GM18951 (cell line): ENCODE measurements at regions of chr6 and their contacts with region 1.

Region 1: GRCh38 chr6:43506667-43507471 is 3.3 kb downstream of the LRRC73 start:
- POLR2A ChIP-seq: no peak

Region 2: GRCh38 chr6:43250992-43251373 is 255.9 kb before region 1 on chr6:
- in situ Hi-C with region 1: loop called (anchors 10 kb)
- POLR2A ChIP-seq: no peak

Region 3: DNA sequence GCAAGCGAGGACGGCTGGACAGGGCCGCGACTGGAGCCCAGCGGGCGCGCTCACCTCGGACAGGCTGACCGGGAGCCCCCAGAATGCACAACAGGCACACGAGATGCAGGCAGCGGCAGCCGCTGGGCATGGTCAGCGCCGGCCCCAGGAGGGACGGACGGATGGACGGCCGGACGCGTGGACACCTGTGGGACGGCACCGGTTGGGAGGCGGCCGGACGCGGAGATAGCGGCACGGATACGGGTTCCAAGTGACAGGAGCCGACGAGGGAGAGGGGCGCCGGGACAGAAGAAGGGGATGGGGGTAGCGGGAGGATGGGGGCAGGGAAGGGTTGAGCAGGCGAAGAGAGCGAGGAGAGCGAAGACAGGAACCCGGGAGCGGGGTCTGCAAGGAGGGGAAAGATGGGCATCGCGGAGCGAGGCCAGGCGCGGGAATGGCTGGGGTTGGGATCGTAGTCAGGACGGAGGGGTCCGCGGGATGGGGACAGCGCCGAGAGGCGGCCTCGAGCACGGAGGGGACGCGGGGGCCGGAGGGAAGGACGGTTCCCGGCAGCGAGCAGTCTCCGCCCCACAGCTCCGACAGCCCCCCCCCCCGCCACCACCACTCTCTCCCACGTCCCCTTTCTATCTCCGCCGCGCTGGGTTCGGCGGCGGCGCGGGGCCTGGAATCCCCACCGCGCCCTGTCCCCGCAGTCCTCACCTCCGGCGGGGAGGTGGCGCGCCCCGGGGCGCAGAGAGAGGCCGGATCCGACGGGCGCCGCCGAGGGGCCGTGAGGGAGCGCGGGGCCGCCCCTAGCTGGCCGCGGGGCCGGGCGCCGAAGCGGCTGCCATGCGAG is 52.0 kb before region 1 on chr6:
- in situ Hi-C with region 1: loop called (anchors 10 kb)
- POLR2A ChIP-seq: peak; percentile 21